ENCODE measurements at regions of chr17 and their contacts with region 1.

Region 1: DNA sequence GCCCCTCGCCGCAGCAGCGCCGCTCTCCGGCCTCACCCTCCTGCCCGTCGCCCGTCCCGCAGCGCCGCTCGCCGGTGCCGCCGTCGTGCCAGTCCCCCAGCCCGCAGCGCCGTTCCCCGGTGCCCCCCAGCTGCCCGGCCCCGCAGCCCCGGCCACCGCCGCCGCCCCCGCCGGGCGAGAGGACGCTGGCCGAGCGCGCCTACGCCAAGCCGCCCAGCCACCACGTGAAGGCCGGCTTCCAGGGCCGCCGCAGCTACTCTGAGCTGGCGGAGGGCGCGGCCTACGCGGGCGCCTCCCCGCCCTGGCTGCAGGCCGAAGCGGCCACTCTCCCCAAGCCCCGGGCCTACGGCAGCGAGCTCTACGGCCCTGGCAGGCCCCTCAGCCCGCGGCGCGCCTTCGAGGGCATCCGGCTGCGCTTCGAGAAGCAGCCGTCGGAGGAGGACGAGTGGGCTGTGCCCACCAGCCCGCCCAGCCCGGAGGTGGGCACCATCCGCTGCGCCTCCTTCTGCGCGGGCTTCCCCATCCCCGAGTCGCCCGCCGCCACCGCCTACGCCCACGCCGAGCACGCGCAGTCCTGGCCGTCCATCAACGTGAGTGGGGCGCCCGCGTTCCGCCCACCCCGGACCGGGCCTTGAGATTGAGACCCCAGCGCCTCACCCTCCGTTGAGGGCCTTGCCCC is 15.0 kb downstream of the TBKBP1 start:
- DNase-seq: peak in 1 of 2 experiments; percentile 67
- H3K4me3 ChIP-seq: peak overlapping the region; percentile 21 to 57 (median 29); a peak in 7 of 8 replicates
- H3K27ac ChIP-seq: no peak overlapping the region
- H3K4me1 ChIP-seq: peaks cover 0 to 9% (median 3%) of the 10 kb centered on the region in 4 experiments; a peak in 5 of 7 replicates
- H3K27me3 ChIP-seq: peaks cover 0 to 19% (median 5%) of the 10 kb centered on the region in 4 experiments; a peak in 4 of 7 replicates
- CTCF ChIP-seq: no peak
- EP300 ChIP-seq: no peak
- POLR2A ChIP-seq: no peak
- RAD21 ChIP-seq: no peak

Region 2: GRCh38 chr17:47611372-47612350 is 97.3 kb before region 1 on chr17:
- CTCF ChIA-PET with region 1: no interaction called
- POLR2A ChIA-PET with region 1: no interaction called
- DNase-seq: no peak
- H3K4me3 ChIP-seq: no peak overlapping the region
- H3K27ac ChIP-seq: no peak overlapping the region
- H3K4me1 ChIP-seq: no peaks in the 10 kb centered on the region
- H3K27me3 ChIP-seq: no peaks in the 10 kb centered on the region
- CTCF ChIP-seq: no peak
- EP300 ChIP-seq: no peak
- POLR2A ChIP-seq: no peak
- RAD21 ChIP-seq: no peak

Region 3: DNA sequence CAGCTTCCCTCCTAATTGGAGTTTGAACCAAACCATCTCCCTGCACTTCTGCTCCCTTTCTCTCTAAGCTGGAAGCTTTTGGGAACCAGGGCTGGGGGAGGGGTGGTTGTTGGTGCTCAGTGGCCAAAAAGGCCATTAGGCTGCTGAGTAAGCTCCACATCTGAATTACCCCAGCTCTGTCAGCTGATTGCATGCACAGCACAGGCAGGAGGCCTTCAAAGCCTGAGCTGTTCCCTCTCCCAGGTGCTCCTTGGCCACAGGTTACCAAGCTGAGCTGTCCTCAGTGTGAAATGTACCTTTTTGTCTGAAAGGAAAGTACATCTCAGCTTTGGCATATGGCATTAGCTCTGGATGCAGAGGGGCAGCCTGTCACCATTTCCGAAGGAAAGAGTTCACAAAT is 21.3 kb before region 1 on chr17:
- CTCF ChIA-PET with region 1: interaction called, 146 read pairs
- POLR2A ChIA-PET with region 1: interaction called, 13 read pairs
- DNase-seq: peak in 1 of 2 experiments; percentile 63
- H3K4me3 ChIP-seq: no peak overlapping the region
- H3K27ac ChIP-seq: no peak overlapping the region
- H3K4me1 ChIP-seq: peaks cover 10 to 16% (median 13%) of the 10 kb centered on the region in 4 experiments
- H3K27me3 ChIP-seq: no peaks in the 10 kb centered on the region
- CTCF ChIP-seq: no peak
- EP300 ChIP-seq: no peak
- POLR2A ChIP-seq: 0 out of 3 replicates have a peak, but pooled peaks of 1 of the 2 experiments have one; percentile 32
- RAD21 ChIP-seq: 0 out of 4 replicates have a peak, but pooled peaks of 1 of the 2 experiments have one; percentile 2